CD4-positive, alpha-beta T cell (primary cell): ENCODE measurements at regions of chr2 and their contacts with region 1.

Region 1: DNA sequence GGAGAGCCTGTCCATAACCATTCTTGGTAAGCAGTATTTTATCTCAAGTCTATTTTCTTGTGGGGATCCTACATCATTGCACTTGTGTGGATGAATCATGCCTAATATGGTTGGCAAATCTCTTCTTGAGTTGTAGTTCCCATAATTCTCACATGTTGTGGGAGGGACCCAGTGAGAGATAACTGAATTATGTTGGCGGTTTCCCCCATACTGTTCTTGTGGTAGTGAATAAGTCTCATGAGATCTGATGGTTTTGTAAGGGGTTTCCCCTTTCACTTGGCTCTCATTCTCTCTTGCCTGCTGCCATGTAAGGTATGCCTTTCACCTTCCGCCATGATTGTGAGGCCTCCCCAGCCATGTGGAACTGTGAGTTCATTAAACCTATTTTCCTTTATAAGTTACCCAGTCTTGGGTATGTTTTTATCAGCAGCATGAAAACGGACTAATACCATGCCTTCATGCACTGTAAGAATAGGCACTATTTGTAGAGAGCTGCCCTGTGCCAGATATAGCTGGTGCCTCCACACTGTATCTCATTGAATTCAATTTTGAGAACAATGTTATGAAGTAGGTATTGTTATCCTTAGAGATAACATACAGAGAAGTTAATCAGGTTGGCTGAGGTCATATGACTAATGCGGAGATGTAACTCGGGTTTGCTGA is 148.3 kb downstream of the PLCL1 start:
- DNase-seq: peak in 1 of 14 experiments; percentile 16
- ATAC-seq: no peak
- H3K4me3 ChIP-seq: no peak overlapping the region
- H3K4me3 Mint-ChIP-seq: peak overlapping the region; percentile 7
- H3K27ac ChIP-seq: no peak overlapping the region
- H3K27ac Mint-ChIP-seq: peak overlapping the region; percentile 80
- H3K4me1 ChIP-seq: no peaks in the 10 kb centered on the region
- H3K4me1 Mint-ChIP-seq: peaks cover 94% of the 10 kb centered on the region
- H3K27me3 ChIP-seq: no peaks in the 10 kb centered on the region
- H3K27me3 Mint-ChIP-seq: no peaks in the 10 kb centered on the region
- CTCF ChIP-seq: no peak

Region 2: GRCh38 chr2:197904446-197904845 is 48.2 kb before region 1 on chr2:
- CTCF ChIA-PET with region 1: no interaction called
- POLR2A ChIA-PET with region 1: no interaction called
- intact Hi-C with region 1: loop called in 1 of 2 experiments (anchors 5 kb)
- DNase-seq: peak in 6 of 14 experiments; percentile 5 to 68 (median 38)
- ATAC-seq: peak; percentile 92
- H3K4me3 ChIP-seq: no peak overlapping the region
- H3K4me3 Mint-ChIP-seq: peak overlapping the region; percentile 2
- H3K27ac ChIP-seq: no peak overlapping the region
- H3K27ac Mint-ChIP-seq: peak overlapping the region; percentile 66
- H3K4me1 ChIP-seq: peaks cover 8% of the 10 kb centered on the region
- H3K4me1 Mint-ChIP-seq: peaks cover 78% of the 10 kb centered on the region
- H3K27me3 ChIP-seq: no peaks in the 10 kb centered on the region
- H3K27me3 Mint-ChIP-seq: no peaks in the 10 kb centered on the region
- CTCF ChIP-seq: no peak

Region 3: GRCh38 chr2:199772035-199772976 is 1819.6 kb after region 1 on chr2:
- CTCF ChIA-PET with region 1: no interaction called
- POLR2A ChIA-PET with region 1: no interaction called
- intact Hi-C with region 1: no loop called
- DNase-seq: peak in 1 of 14 experiments; percentile 5
- ATAC-seq: no peak
- H3K4me3 ChIP-seq: no peak overlapping the region
- H3K4me3 Mint-ChIP-seq: no peak overlapping the region
- H3K27ac ChIP-seq: no peak overlapping the region
- H3K27ac Mint-ChIP-seq: no peak overlapping the region
- H3K4me1 ChIP-seq: no peaks in the 10 kb centered on the region
- H3K4me1 Mint-ChIP-seq: no peaks in the 10 kb centered on the region
- H3K27me3 ChIP-seq: no peaks in the 10 kb centered on the region
- H3K27me3 Mint-ChIP-seq: peaks cover 6% of the 10 kb centered on the region
- CTCF ChIP-seq: no peak